PC-9 (cell line): ENCODE measurements at regions of chr11 and their contacts with region 1.

Region 1: DNA sequence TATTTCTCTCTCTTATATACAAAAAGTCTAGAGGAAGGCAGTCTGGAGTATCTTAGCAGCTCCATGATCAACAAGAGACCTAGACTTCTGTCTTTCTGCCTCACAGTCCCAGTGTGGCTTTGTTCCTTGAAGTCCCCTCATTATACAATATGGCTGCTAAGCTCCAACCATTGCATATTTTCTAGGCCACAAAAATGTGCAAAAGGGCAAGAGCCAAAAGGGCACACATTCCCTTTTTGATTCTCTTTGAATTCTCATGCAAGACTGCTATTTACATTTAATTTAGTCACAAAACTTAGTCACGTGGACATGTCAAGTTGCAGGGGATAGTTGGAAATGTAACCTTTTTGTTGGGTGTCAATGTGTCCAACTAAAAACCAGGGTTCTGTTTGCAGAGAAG is 64.2 kb upstream of the OLFML1 start:
- DNase-seq: no peak
- H3K4me3 ChIP-seq: no peak overlapping the region
- H3K27ac ChIP-seq: no peak overlapping the region
- H3K4me1 ChIP-seq: no peaks in the 10 kb centered on the region
- H3K27me3 ChIP-seq: no peaks in the 10 kb centered on the region
- CTCF ChIP-seq: no peak

Region 2: GRCh38 chr11:7384691-7385090 is 36.4 kb before region 1 on chr11:
- CTCF ChIA-PET with region 1: no interaction called
- POLR2A ChIA-PET with region 1: no interaction called
- intact Hi-C with region 1: loop called (anchors 2 kb)
- DNase-seq: no peak
- H3K4me3 ChIP-seq: no peak overlapping the region
- H3K27ac ChIP-seq: no peak overlapping the region
- H3K4me1 ChIP-seq: no peaks in the 10 kb centered on the region
- H3K27me3 ChIP-seq: no peaks in the 10 kb centered on the region
- CTCF ChIP-seq: no peak